ENCODE measurements at regions of chr3 and their contacts with region 1.

Region 1: DNA sequence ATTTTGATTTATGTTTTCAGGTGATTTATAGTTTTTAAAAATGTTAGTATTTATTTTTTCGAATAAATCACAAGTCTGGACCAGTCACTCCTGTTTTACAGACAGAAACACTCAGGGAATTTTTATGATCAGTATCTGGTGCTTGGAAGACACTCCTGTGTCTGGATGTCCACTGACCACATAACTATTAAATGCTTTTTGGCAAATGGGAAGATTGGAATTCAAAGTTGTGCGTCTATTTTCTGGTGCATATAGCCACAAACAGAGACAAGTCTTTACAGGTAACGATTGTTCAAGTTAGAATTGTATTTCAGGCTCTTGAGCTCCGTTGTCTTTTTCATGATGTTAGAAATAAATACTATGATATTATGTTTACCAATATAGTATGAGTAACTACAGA is 12.2 kb downstream of the CP start:
- DNase-seq: no peak
- H3K4me3 Mint-ChIP-seq: no peak overlapping the region
- H3K27ac Mint-ChIP-seq: no peak overlapping the region
- H3K4me1 Mint-ChIP-seq: peaks cover 5% of the 10 kb centered on the region
- H3K27me3 Mint-ChIP-seq: peaks cover 56% of the 10 kb centered on the region

Region 2: DNA sequence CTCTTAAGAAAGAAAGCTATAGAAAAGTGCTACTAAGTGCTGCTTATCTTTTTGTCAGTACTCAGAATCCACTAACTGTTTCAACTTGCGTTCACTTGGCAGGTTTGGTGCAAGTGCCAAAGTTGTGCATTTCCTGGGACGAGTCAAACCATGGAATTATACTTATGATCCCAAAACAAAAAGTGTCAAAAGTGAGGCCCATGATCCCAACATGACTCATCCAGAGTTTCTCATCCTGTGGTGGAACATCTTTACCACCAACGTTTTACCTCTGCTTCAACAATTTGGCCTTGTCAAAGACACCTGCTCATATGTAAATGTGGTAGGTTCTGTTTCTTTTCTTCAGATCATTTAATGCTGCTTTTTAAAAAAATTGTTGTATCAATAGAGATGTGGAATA is 185.5 kb before region 1 on chr3:
- intact Hi-C with region 1: no loop called
- DNase-seq: no peak
- H3K4me3 Mint-ChIP-seq: no peak overlapping the region
- H3K27ac Mint-ChIP-seq: no peak overlapping the region
- H3K4me1 Mint-ChIP-seq: peaks cover 24% of the 10 kb centered on the region
- H3K27me3 Mint-ChIP-seq: no peaks in the 10 kb centered on the region

Region 3: DNA sequence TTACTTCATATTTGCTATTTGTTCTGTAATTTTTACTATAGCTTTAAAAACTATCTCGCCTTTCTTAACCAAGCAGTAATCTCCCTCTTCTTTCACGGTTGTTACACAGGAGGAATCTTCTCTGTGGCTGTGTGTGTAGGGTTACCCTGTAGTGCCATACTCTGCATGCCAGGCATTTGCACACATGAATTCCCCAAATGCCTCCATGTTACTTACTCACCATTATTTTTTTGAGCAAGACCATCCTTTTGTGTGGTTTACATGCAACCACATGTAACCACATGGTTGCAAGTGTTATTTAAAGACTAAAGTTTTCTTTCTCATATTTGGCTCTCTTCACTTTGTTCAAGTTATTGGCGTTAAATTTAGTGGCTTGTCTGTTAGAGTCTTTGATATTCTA is 34.5 kb before region 1 on chr3:
- intact Hi-C with region 1: no loop called
- DNase-seq: peak; percentile 2
- H3K4me3 Mint-ChIP-seq: no peak overlapping the region
- H3K27ac Mint-ChIP-seq: no peak overlapping the region
- H3K4me1 Mint-ChIP-seq: peaks cover 8% of the 10 kb centered on the region
- H3K27me3 Mint-ChIP-seq: no peaks in the 10 kb centered on the region

Region 4: DNA sequence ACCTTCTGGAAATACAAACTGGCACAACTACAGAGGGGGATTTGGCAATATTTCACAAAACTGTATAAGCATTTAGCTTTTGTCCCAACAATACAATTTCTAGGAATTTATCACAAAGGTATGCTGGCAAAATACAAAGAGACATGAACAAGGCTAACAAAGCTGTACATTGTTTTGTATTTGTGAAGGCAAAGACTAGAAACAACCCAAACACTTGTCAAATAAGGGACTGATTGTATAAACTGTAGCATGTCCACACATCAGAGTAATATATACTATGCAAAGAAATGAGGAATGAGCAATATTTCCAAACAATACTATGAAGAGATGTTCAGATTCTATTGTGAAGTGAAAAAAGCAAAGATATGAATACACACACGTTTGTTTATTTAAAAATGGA is 14.2 kb before region 1 on chr3:
- intact Hi-C with region 1: loop called (anchors 2 kb)
- DNase-seq: no peak
- H3K4me3 Mint-ChIP-seq: no peak overlapping the region
- H3K27ac Mint-ChIP-seq: no peak overlapping the region
- H3K4me1 Mint-ChIP-seq: no peaks in the 10 kb centered on the region
- H3K27me3 Mint-ChIP-seq: peaks cover 47% of the 10 kb centered on the region